ENCODE measurements at regions of chr6 and their contacts with region 1.

Region 1: GRCh38 chr6:108492131-108492766 is 68.5 kb upstream of the FOXO3 start:
- DNase-seq: peak; percentile 77
- H3K4me3 ChIP-seq: no peak overlapping the region
- H3K27ac ChIP-seq: no peak overlapping the region
- H3K4me1 ChIP-seq: no peaks in the 10 kb centered on the region
- H3K27me3 ChIP-seq: no peaks in the 10 kb centered on the region
- CTCF ChIP-seq: peak; percentile 47 to 54
- POLR2A ChIP-seq: no peak

Region 2: GRCh38 chr6:107991061-107991460 is 501.2 kb before region 1 on chr6:
- CTCF ChIA-PET with region 1: no interaction called
- POLR2A ChIA-PET with region 1: no interaction called
- dilution Hi-C with region 1: no loop called
- intact Hi-C with region 1: loop called (anchors 10 kb)
- DNase-seq: no peak
- H3K4me3 ChIP-seq: no peak overlapping the region
- H3K27ac ChIP-seq: no peak overlapping the region
- H3K4me1 ChIP-seq: no peaks in the 10 kb centered on the region
- H3K27me3 ChIP-seq: peaks cover 6 to 8% of the 10 kb centered on the region in 2 experiments
- CTCF ChIP-seq: no peak
- POLR2A ChIP-seq: no peak

Region 3: GRCh38 chr6:108174371-108175175 is 317.7 kb before region 1 on chr6:
- CTCF ChIA-PET with region 1: interaction called, 45 read pairs
- POLR2A ChIA-PET with region 1: no interaction called
- dilution Hi-C with region 1: no loop called
- intact Hi-C with region 1: loop called (anchors 5 kb)
- DNase-seq: no peak
- H3K4me3 ChIP-seq: no peak overlapping the region
- H3K27ac ChIP-seq: no peak overlapping the region
- H3K4me1 ChIP-seq: peaks cover 5% of the 10 kb centered on the region
- H3K27me3 ChIP-seq: peaks cover 78 to 100% of the 10 kb centered on the region in 2 experiments
- CTCF ChIP-seq: no peak
- POLR2A ChIP-seq: no peak

Region 4: GRCh38 chr6:108260809-108261569 is 231.3 kb before region 1 on chr6 and contains the start of gene SNX3:
- CTCF ChIA-PET with region 1: interaction called, 95 read pairs
- POLR2A ChIA-PET with region 1: no interaction called
- dilution Hi-C with region 1: no loop called
- intact Hi-C with region 1: loop called (anchors 1 kb)
- DNase-seq: peak; percentile 98
- H3K4me3 ChIP-seq: peak within 1 kb of the TSS; percentile 81 to 95 (median 85)
- H3K27ac ChIP-seq: peak within 1 kb of the TSS; percentile 59
- H3K4me1 ChIP-seq: peaks cover 14% of the 10 kb centered on the region
- H3K27me3 ChIP-seq: no peaks in the 10 kb centered on the region
- CTCF ChIP-seq: peak in 1 of 2 donors; percentile 2
- POLR2A ChIP-seq: peak; percentile 63
- total RNA-seq, gene SNX3: 141 and 155 TPM in 2 replicates

Region 5: DNA sequence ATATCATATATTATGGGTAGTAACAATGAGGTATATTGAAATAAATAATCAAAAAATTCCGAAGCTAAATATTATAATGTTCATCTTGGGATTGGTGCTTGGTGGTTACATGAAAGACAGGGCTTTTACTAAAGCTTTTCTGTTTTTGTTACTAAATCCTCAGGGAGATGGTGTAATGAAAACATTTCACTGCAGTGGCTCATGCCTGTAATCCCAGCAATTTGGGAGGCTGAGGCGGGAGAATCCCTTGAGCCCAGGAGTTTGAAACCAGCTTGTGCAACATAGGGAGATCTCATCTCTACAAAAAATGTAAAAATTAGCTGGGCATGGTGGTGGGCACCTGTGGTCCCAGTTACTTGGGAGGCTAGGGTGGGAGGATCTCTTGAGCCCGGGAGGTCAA is 154.5 kb before region 1 on chr6:
- CTCF ChIA-PET with region 1: interaction called, 10 read pairs
- POLR2A ChIA-PET with region 1: no interaction called
- dilution Hi-C with region 1: no loop called
- intact Hi-C with region 1: no loop called
- DNase-seq: no peak
- H3K4me3 ChIP-seq: no peak overlapping the region
- H3K27ac ChIP-seq: no peak overlapping the region
- H3K4me1 ChIP-seq: no peaks in the 10 kb centered on the region
- H3K27me3 ChIP-seq: no peaks in the 10 kb centered on the region
- CTCF ChIP-seq: no peak
- POLR2A ChIP-seq: no peak

Region 6: DNA sequence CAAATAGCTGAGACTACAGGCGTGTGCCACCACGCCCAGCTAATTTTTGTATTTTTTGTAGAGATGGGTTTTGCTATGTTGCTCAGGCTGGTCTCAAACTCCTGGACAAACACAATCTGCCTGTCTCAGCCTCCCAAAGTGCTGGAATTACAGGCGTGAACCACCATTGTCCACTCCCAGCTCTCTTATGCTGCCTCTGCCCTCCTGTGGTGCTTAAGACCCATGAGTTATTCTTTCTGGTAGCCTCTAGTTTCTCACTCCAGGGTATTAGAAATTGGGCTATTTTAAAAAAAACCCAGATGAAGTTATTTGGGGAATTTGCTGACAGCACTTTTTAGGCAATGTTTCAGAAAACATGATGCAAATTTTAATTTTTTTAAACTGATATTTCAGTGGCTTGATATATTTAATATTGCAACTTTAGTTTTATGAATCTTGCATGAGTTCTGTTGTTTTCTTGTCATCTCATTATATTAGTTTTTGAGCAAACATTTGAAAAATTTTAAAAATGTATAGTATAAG is 45.6 kb before region 1 on chr6:
- CTCF ChIA-PET with region 1: interaction called, 29 read pairs
- POLR2A ChIA-PET with region 1: no interaction called
- dilution Hi-C with region 1: no loop called
- intact Hi-C with region 1: no loop called
- DNase-seq: peak; percentile 10
- H3K4me3 ChIP-seq: peak overlapping the region in 1 of 3 experiments; percentile 32
- H3K27ac ChIP-seq: no peak overlapping the region
- H3K4me1 ChIP-seq: peaks cover 27% of the 10 kb centered on the region
- H3K27me3 ChIP-seq: no peaks in the 10 kb centered on the region
- CTCF ChIP-seq: no peak
- POLR2A ChIP-seq: no peak

Region 7: GRCh38 chr6:108609276-108609769 is 117.1 kb after region 1 on chr6:
- CTCF ChIA-PET with region 1: no interaction called
- POLR2A ChIA-PET with region 1: no interaction called
- dilution Hi-C with region 1: no loop called
- intact Hi-C with region 1: no loop called
- DNase-seq: no peak
- H3K4me3 ChIP-seq: no peak overlapping the region
- H3K27ac ChIP-seq: no peak overlapping the region
- H3K4me1 ChIP-seq: no peaks in the 10 kb centered on the region
- H3K27me3 ChIP-seq: no peaks in the 10 kb centered on the region
- CTCF ChIP-seq: no peak
- POLR2A ChIP-seq: no peak

Measured in endothelial cell of umbilical vein (primary cell).